Activated CD4-positive, alpha-beta T cell treated with anti-CD3 and anti-CD28 coated beads, Interleukin-2, amount 10 ng/mL, durations not matched to agents 7 days and 5 days (primary cell): ENCODE measurements at regions of chr18 and their contacts with region 1.

Region 1: GRCh38 chr18:13823707-13824395 is at the start of gene MC5R:
- DNase-seq: peak; percentile 64
- H3K4me3 Mint-ChIP-seq: peak within 1 kb of the TSS; percentile 35
- H3K27ac Mint-ChIP-seq: no peak within 1 kb of the TSS
- H3K4me1 Mint-ChIP-seq: peaks cover 5% of the 10 kb centered on the region
- H3K27me3 Mint-ChIP-seq: peaks cover 22% of the 10 kb centered on the region
- total RNA-seq, gene MC5R: not detected

Region 2: DNA sequence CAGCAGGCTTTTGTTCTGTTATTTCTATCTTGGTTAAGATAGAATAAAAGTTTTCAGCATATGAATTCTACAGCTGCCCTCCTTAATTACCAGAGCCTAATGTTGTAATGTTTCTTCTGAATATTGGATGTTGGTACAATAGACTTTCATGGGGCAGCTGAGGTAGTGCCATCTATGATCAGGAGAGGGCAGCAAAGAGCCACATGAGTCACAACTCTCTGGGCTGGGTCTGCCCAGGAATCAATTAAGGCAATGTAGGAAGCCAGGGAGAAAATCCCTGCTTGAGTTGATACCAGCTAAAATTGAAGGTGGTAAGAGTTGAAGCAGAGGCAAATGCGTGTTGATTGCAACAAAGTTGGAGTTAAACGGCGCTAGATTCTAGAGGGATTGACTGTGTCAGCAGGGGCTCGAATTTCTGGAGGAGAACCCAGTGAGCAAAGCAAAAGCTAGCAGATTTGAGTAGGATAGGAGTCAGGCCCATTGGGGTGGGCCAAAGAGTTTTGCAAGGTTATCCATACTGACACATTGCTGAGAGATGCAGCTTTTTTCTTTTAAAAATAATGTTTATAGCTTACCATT is 10.5 kb before region 1 on chr18:
- CTCF ChIA-PET with region 1: interaction called, 11 read pairs
- POLR2A ChIA-PET with region 1: no interaction called
- DNase-seq: peak; percentile 56
- H3K4me3 Mint-ChIP-seq: no peak overlapping the region
- H3K27ac Mint-ChIP-seq: no peak overlapping the region
- H3K4me1 Mint-ChIP-seq: no peaks in the 10 kb centered on the region
- H3K27me3 Mint-ChIP-seq: peaks cover 7% of the 10 kb centered on the region